Naive thymus-derived CD8-positive, alpha-beta T cell (primary cell): ENCODE measurements at regions of chr10 and their contacts with region 1.

Region 1: GRCh38 chr10:14588084-14588937 is 186.4 kb downstream of the FAM107B start:
- DNase-seq: peak in 3 of 10 donors; percentile 44 to 49 (median 47)
- ATAC-seq: peak; percentile 2 to 26
- H3K4me3 Mint-ChIP-seq: peak overlapping the region; percentile 72 to 90 (median 84)
- H3K27ac Mint-ChIP-seq: peak overlapping the region; percentile 90 to 100 (median 98)
- H3K4me1 Mint-ChIP-seq: peaks cover 39 to 94% (median 87%) of the 10 kb centered on the region in 4 donors
- H3K27me3 Mint-ChIP-seq: no peaks in the 10 kb centered on the region

Region 2: GRCh38 chr10:14466257-14466656 is 122.1 kb before region 1 on chr10:
- POLR2A ChIA-PET with region 1: no interaction called
- DNase-seq: no peak
- ATAC-seq: no peak
- H3K4me3 Mint-ChIP-seq: no peak overlapping the region
- H3K27ac Mint-ChIP-seq: no peak overlapping the region
- H3K4me1 Mint-ChIP-seq: no peaks in the 10 kb centered on the region
- H3K27me3 Mint-ChIP-seq: peaks cover 5 to 33% (median 22%) of the 10 kb centered on the region in 5 donors

Region 3: GRCh38 chr10:14601872-14602725 is 13.8 kb after region 1 on chr10:
- POLR2A ChIA-PET with region 1: interaction called, 30 read pairs
- DNase-seq: peak in 7 of 10 donors; percentile 41 to 79 (median 48)
- ATAC-seq: peak; percentile 14 to 25
- H3K4me3 Mint-ChIP-seq: peak overlapping the region; percentile 80 to 100 (median 98)
- H3K27ac Mint-ChIP-seq: peak overlapping the region; percentile 80 to 98 (median 92)
- H3K4me1 Mint-ChIP-seq: peaks cover 41 to 87% (median 72%) of the 10 kb centered on the region in 4 donors
- H3K27me3 Mint-ChIP-seq: no peaks in the 10 kb centered on the region

Region 4: DNA sequence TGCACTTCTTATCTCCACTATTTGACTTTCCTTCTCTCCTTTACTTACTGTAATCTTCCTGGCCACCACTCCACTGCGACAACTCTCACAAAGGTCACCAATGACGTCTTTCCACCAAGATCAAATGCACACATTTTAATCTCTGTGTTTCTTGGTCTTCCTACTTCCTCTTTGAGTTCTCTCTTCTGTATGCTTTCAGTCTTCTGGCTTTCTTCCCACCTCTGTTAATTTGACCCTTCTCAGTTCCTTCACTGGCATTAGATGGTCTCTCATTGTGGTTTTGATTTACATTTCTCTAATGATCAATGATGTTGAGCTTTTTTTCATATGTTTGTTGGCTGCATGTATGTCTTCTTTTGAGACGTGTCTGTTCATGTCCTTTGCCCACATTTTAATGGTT is 154.5 kb after region 1 on chr10:
- POLR2A ChIA-PET with region 1: no interaction called
- DNase-seq: peak in 2 of 10 donors; percentile 11 to 25
- ATAC-seq: peak; percentile 80 to 85
- H3K4me3 Mint-ChIP-seq: peak overlapping the region in 7 of 10 donors; percentile 2 to 46 (median 6)
- H3K27ac Mint-ChIP-seq: peak overlapping the region in 8 of 10 donors; percentile 18 to 76 (median 58)
- H3K4me1 Mint-ChIP-seq: peaks cover 14 to 62% (median 18%) of the 10 kb centered on the region in 4 donors
- H3K27me3 Mint-ChIP-seq: no peaks in the 10 kb centered on the region